Astrocyte of the cerebellum (primary cell): ENCODE measurements at regions of chr7 and their contacts with region 1.

Region 1: GRCh38 chr7:21149809-21150208 is 278.1 kb upstream of the SP4 start:
- DNase-seq: no peak
- H3K4me3 ChIP-seq: no peak overlapping the region
- CTCF ChIP-seq: no peak

Region 2: GRCh38 chr7:21099432-21099831 is 50.4 kb before region 1 on chr7:
- in situ Hi-C with region 1: no loop called
- DNase-seq: no peak
- H3K4me3 ChIP-seq: no peak overlapping the region
- CTCF ChIP-seq: no peak

Region 3: DNA sequence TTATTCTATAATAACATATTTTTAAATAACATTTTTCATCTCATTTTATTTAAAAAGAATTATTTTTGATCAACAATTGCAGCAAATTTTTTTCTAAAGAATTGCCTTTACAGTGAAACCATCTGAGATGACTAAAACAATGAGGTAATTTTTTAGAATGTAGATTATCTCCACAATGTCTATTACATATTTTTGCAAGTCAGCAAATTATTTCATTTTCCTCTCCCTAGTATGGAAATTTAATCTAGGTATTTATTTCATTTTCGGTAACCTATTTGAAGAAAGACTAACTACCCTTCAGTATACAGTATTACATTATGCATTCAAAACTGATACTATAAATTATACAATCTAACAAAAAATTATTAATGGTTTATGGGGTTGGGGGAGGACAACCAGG is 64.8 kb after region 1 on chr7:
- in situ Hi-C with region 1: loop called (anchors 5 kb)
- DNase-seq: no peak
- H3K4me3 ChIP-seq: no peak overlapping the region
- CTCF ChIP-seq: no peak